ENCODE measurements at regions of chr10 and their contacts with region 1.

Region 1: GRCh38 chr10:11782793-11783557 is 40.2 kb upstream of the PROSER2 start:
- DNase-seq: peak; percentile 72
- CTCF ChIP-seq: peak; percentile 58

Region 2: DNA sequence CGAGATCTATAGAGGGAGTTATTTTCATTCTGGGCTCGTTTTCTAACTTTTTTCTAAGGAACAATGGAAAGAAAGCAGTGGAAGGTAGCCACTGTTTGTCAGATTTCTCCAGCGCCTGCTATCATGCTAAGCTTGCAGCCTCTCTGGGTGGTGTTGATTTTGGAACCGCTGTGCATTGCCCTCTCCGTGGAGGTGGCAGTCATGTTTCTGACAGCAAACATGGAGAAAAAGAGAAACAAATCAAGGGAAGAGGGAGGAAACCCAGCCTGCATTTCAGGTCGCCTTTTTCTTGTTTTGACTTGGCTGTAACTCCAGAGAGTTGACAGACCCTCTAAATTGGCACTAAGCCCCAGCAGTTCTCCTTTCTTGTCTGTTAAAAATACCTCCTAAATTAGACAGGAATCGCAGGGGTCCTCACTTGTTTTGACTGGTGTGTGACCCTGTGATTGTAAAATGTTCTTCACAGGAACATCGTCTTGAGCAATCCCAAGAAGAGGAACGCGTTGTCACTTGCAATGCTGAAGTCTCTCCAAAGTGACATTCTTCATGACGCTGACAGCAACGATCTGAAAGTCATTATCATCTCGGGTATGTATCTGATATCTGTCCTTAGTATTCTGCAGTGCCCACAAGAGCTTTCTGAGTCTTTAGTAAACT is 36.0 kb before region 1 on chr10:
- CTCF ChIA-PET with region 1: no interaction called
- POLR2A ChIA-PET with region 1: no interaction called
- DNase-seq: no peak
- CTCF ChIP-seq: no peak

Region 3: GRCh38 chr10:11765141-11765540 is 17.8 kb before region 1 on chr10:
- CTCF ChIA-PET with region 1: interaction called, 14 read pairs
- POLR2A ChIA-PET with region 1: no interaction called
- DNase-seq: no peak
- CTCF ChIP-seq: no peak

Region 4: DNA sequence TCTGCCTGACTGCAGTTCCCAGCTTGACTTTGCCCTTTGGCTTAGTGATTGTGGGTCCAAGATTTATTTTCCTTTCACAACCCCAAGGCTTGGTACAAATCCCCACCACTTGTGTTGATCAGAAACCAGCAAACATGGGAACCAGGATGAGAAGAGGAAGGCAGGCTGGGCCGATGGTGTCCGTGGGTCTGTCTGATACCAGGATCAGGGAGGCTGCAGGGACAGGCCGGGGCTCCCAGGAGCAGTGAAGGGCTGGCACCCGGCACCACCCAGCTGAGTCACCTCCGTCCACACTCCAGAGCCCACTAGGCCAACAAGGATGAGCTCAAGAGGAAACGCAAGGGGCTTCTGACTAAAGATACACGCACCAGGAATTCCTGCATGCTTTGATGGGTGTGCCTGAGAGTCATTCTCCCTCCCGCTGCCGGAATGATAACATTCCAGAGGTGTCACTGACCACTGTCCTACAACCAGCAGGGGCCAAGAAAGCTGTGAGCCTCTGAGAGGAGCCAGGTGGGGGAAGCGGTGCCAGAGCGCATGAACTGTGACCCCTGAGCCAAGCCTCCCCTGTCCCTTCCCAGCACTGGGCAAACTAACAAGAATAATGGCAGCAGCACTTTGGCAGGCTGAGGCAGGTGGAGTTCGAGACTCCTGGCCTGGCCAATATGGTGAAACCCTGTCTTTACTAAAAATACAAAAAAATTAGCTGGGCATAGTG is 10.9 kb after region 1 on chr10:
- CTCF ChIA-PET with region 1: interaction called, 20 read pairs
- POLR2A ChIA-PET with region 1: no interaction called
- DNase-seq: no peak
- CTCF ChIP-seq: no peak

Region 5: GRCh38 chr10:11798845-11799735 is 16.1 kb after region 1 on chr10:
- CTCF ChIA-PET with region 1: interaction called, 20 read pairs
- POLR2A ChIA-PET with region 1: no interaction called
- DNase-seq: no peak
- CTCF ChIP-seq: no peak

Region 6: GRCh38 chr10:11822031-11822756 is 39.2 kb after region 1 on chr10:
- CTCF ChIA-PET with region 1: interaction called, 10 read pairs
- POLR2A ChIA-PET with region 1: no interaction called
- DNase-seq: no peak
- CTCF ChIP-seq: no peak

Region 7: GRCh38 chr10:11863353-11864109 is 80.6 kb after region 1 on chr10:
- CTCF ChIA-PET with region 1: no interaction called
- POLR2A ChIA-PET with region 1: no interaction called
- DNase-seq: peak; percentile 64
- CTCF ChIP-seq: no peak

Region 8: DNA sequence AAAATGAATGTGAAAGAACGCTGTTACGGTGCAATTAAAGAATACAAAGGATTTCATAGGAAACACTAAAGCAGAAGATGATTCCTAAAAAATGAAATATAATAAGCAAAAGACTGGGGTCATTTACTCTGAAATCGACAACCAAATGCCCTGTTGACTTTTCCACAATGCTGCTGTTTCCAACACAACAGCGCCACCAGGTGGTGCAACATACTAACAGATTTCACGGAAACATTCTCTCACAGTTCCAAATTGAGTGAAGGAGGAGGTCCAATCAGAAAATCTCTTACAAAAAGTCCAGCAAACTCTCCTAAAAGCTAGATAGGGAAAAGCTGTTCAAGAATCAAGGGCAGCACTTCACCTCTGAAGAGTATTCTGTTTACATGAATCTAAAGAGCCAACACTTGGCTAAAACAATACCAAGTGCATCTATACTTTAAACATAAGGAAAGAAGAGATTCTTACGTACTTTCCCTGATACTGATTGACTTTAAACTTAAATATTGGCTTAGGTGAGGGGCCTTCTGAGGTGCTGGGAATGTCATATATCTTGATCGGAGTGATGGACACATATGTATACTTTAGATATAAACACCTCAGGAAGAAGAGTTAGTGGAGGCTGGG is 203.7 kb after region 1 on chr10:
- CTCF ChIA-PET with region 1: interaction called, 18 read pairs
- POLR2A ChIA-PET with region 1: no interaction called
- DNase-seq: peak; percentile 67
- CTCF ChIP-seq: peak; percentile 68

Measured in GM10248 (cell line).